IMR-90 (cell line): ENCODE measurements at regions of chr12 and their contacts with region 1.

Region 1: GRCh38 chr12:98475565-98475908 is 39.9 kb upstream of the TMPO start:
- DNase-seq: no peak
- ATAC-seq: no peak
- H3K4me3 ChIP-seq: no peak overlapping the region
- H3K27ac ChIP-seq: no peak overlapping the region
- H3K4me1 ChIP-seq: peaks cover 2% of the 10 kb centered on the region; the same call in 1 of the 2 replicates
- H3K27me3 ChIP-seq: no peaks in the 10 kb centered on the region; the same call in none of the 2 replicates
- CTCF ChIP-seq: no peak
- POLR2A ChIP-seq: no peak
- RAD21 ChIP-seq: no peak

Region 2: DNA sequence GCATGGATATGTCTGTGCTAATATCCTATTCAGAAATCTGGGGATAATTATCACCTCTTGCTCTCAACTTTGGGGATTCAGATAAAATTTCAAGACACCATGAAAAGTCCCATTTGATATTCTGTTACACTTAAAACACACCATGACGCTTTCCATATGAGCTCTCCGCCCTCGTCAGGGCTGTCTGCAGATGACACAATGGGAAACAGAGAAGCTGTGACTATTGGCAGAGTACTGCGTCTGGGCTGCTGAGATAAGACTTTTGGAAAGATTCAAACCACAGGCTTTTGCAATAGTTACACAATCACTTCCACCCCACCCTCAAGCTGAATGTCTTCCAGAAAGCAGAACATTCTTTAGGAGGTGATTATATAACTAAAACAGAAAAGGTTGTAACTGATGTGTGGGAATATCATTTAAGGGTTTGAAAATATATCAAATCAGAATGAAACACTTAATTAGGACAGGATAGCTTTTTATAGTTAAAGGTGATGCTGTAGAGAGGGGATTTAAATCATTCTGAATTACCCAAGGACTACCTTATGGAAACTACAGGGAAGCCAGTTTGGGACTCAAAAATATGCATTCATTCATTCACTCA is 35.5 kb before region 1 on chr12:
- CTCF ChIA-PET with region 1: no interaction called
- POLR2A ChIA-PET with region 1: no interaction called
- dilution Hi-C with region 1: no loop called
- in situ Hi-C with region 1: no loop called
- intact Hi-C with region 1: loop called (anchors 1 kb)
- DNase-seq: peak; percentile 95
- ATAC-seq: peak; percentile 87
- H3K4me3 ChIP-seq: no peak overlapping the region
- H3K27ac ChIP-seq: no peak overlapping the region
- H3K4me1 ChIP-seq: peaks cover 4% of the 10 kb centered on the region
- H3K27me3 ChIP-seq: peaks cover 23% of the 10 kb centered on the region
- CTCF ChIP-seq: 0 out of 2 replicates have a peak, but pooled peaks have one; percentile 9
- POLR2A ChIP-seq: no peak
- RAD21 ChIP-seq: 0 out of 2 replicates have a peak, but pooled peaks have one; percentile 9

Region 3: GRCh38 chr12:98503592-98504367 is 28.2 kb after region 1 on chr12:
- CTCF ChIA-PET with region 1: no interaction called
- POLR2A ChIA-PET with region 1: no interaction called
- dilution Hi-C with region 1: no loop called
- in situ Hi-C with region 1: no loop called
- intact Hi-C with region 1: no loop called
- DNase-seq: peak; percentile 89
- ATAC-seq: peak; percentile 90
- H3K4me3 ChIP-seq: peak overlapping the region; percentile 72
- H3K27ac ChIP-seq: peak overlapping the region; percentile 93
- H3K4me1 ChIP-seq: no peaks in the 10 kb centered on the region
- H3K27me3 ChIP-seq: no peaks in the 10 kb centered on the region
- CTCF ChIP-seq: no peak
- POLR2A ChIP-seq: no peak
- RAD21 ChIP-seq: no peak

Region 4: GRCh38 chr12:98951406-98951805 is 475.9 kb after region 1 on chr12:
- CTCF ChIA-PET with region 1: no interaction called
- POLR2A ChIA-PET with region 1: interaction called, 18 read pairs
- dilution Hi-C with region 1: no loop called
- in situ Hi-C with region 1: no loop called
- intact Hi-C with region 1: no loop called
- DNase-seq: no peak
- ATAC-seq: no peak
- H3K4me3 ChIP-seq: no peak overlapping the region
- H3K27ac ChIP-seq: no peak overlapping the region
- H3K4me1 ChIP-seq: no peaks in the 10 kb centered on the region
- H3K27me3 ChIP-seq: no peaks in the 10 kb centered on the region
- CTCF ChIP-seq: no peak
- POLR2A ChIP-seq: no peak
- RAD21 ChIP-seq: no peak